Heart right ventricle (tissue), 16 donors: ENCODE measurements at regions of chr7 and their contacts with region 1.

Region 1: GRCh38 chr7:115387137-115387536 is 465.2 kb downstream of the MDFIC start:
- DNase-seq: no peak
- ATAC-seq: no peak
- H3K4me3 ChIP-seq: no peak overlapping the region
- H3K27ac ChIP-seq: no peak overlapping the region
- H3K4me1 ChIP-seq: no peaks in the 10 kb centered on the region
- H3K27me3 ChIP-seq: no peaks in the 10 kb centered on the region
- CTCF ChIP-seq: no peak

Region 2: DNA sequence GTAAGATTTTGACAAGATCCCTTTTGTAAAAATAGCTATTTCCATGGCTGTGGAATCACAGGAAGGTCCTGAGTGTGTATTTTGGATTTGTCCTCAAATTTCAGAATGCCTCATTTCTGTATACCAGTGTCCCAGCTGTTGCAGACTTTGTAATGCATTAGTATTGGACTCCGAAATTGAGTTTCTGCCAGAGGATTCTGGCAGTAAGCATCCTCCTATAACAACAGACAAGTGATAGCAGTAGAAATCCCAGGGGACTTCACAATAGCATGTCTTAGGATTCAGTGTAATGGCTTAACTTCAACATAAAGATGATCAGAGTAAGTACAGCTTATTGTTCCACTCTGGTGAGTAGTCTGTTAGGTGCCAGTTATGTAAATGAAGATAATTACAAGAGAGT is 867.9 kb before region 1 on chr7:
- intact Hi-C with region 1: no loop called
- DNase-seq: no peak
- ATAC-seq: peak in 1 of 8 donors; percentile 11
- H3K4me3 ChIP-seq: no peak overlapping the region
- H3K27ac ChIP-seq: no peak overlapping the region
- H3K4me1 ChIP-seq: peaks cover 0 to 5% (median 0%) of the 10 kb centered on the region in 9 donors
- H3K27me3 ChIP-seq: no peaks in the 10 kb centered on the region
- CTCF ChIP-seq: no peak

Region 3: DNA sequence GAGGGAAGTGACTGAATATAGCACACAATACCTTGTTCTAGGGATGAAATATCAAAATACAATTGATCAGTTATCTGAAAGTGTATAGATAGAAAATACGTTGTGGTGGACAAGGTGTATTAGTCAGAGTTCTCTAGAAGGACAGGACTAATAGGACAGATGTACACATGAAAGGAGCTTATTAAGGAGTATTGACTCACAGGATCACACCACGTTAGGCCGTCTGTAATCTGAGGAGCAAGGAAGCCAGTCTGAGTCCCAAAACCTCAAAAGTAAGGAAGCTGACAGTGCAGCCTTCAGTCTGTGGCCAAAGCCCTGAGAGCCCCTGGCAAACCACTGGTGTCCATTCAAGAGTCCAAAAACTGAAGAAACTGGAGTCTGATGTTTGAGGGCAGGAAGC is 59.1 kb before region 1 on chr7:
- intact Hi-C with region 1: no loop called
- DNase-seq: no peak
- ATAC-seq: no peak
- H3K4me3 ChIP-seq: no peak overlapping the region
- H3K27ac ChIP-seq: no peak overlapping the region
- H3K4me1 ChIP-seq: no peaks in the 10 kb centered on the region
- H3K27me3 ChIP-seq: no peaks in the 10 kb centered on the region
- CTCF ChIP-seq: no peak

Region 4: GRCh38 chr7:115340828-115341227 is 46.3 kb before region 1 on chr7:
- intact Hi-C with region 1: loop called in 1 of 10 experiments (anchors 5 kb)
- DNase-seq: no peak
- ATAC-seq: no peak
- H3K4me3 ChIP-seq: no peak overlapping the region
- H3K27ac ChIP-seq: no peak overlapping the region
- H3K4me1 ChIP-seq: no peaks in the 10 kb centered on the region
- H3K27me3 ChIP-seq: no peaks in the 10 kb centered on the region
- CTCF ChIP-seq: peak in 2 of 9 donors; percentile 25 to 27

Region 5: GRCh38 chr7:115734641-115735040 is 347.5 kb after region 1 on chr7:
- intact Hi-C with region 1: no loop called
- DNase-seq: no peak
- ATAC-seq: no peak
- H3K4me3 ChIP-seq: no peak overlapping the region
- H3K27ac ChIP-seq: no peak overlapping the region
- H3K4me1 ChIP-seq: no peaks in the 10 kb centered on the region
- H3K27me3 ChIP-seq: no peaks in the 10 kb centered on the region
- CTCF ChIP-seq: no peak